ENCODE measurements at regions of chr19 and their contacts with region 1.

Region 1: GRCh38 chr19:12847159-12848139 is 9.1 kb downstream of the MAST1 start:
- DNase-seq: peak; percentile 81 to 91 (median 90)
- H3K4me3 ChIP-seq: peak overlapping the region in 3 of 7 experiments; percentile 25 to 68 (median 46)
- H3K27ac ChIP-seq: no peak overlapping the region
- H3K4me1 ChIP-seq: peaks cover 0 to 11% (median 8%) of the 10 kb centered on the region in 4 experiments
- H3K27me3 ChIP-seq: peaks cover 0 to 22% (median 6%) of the 10 kb centered on the region in 5 experiments

Region 2: GRCh38 chr19:12757544-12758274 is 89.7 kb before region 1 on chr19:
- CTCF ChIA-PET with region 1: interaction called, 14 read pairs
- POLR2A ChIA-PET with region 1: no interaction called
- DNase-seq: peak; percentile 77 to 87 (median 87)
- H3K4me3 ChIP-seq: peak overlapping the region in 6 of 7 experiments; percentile 6 to 62 (median 37)
- H3K27ac ChIP-seq: no peak overlapping the region
- H3K4me1 ChIP-seq: peaks cover 0 to 8% (median 5%) of the 10 kb centered on the region in 4 experiments
- H3K27me3 ChIP-seq: peaks cover 0 to 19% (median 2%) of the 10 kb centered on the region in 5 experiments

Region 3: DNA sequence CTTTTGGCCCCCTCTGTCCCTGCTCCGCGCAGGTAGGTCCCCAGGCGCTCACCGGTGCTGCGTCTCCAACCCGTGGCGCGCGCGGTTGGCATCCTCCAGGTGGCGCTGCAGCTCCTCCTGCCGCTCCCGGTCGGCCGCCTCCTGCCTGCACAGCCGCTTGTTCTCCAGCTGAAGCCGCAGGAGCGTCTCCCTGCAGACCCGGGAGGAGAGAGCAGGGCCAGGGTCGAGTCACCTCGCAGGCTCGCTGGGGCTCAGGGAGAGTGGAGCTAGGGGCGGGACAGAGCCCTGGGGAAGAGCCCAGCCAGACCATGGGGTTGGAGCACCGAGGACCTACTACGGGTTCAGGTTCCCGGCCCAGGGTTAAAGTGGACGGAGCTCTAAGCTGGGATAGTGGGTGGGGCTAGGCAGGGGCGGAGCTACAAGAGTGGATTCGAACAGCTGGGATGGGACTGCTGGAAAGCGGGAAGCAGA is 81.4 kb before region 1 on chr19:
- CTCF ChIA-PET with region 1: interaction called, 15 read pairs
- POLR2A ChIA-PET with region 1: no interaction called
- DNase-seq: peak in 1 of 3 donors; percentile 59
- H3K4me3 ChIP-seq: peak overlapping the region in 5 of 7 experiments; percentile 26 to 78 (median 51)
- H3K27ac ChIP-seq: no peak overlapping the region
- H3K4me1 ChIP-seq: peaks cover 2 to 6% (median 4%) of the 10 kb centered on the region in 4 experiments
- H3K27me3 ChIP-seq: no peaks in the 10 kb centered on the region

Region 4: DNA sequence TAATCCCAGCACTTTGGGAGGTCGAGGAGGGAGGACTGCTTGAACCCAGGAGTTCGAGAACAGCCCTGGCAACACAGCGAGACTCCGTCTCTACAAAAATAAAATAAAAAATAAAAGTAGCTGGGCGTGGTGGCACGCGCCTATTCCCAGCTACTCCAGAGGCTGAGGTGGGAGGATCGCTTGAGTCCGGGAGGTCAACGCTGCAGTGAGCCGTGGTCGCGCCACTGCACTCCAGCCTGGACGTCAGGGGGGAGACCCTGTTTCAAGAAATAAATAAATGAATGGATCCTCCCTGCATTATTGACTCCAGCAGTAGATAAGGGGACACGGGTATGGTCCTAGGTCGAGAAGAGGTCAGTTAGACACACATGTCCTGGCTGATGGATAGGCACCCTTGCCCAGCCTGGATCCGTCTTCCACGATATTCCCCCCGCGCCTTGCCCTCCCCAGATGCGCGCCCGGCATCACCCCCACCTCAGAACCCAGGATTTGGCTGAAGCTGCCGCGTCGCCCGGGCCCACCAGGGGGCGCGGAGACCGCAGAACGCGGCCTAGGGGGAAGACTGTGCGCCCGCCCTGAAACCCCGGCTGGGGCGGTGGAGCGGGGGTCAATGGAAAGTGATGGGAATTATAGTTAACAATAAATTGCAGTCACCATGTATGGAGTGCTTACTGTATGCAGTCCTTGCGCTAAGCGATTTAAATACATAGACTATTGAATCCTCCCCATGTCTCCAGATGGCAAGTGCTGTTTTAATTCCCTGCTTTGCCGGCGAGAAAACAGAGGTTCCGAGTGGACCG is 70.0 kb before region 1 on chr19:
- CTCF ChIA-PET with region 1: interaction called, 14 read pairs
- POLR2A ChIA-PET with region 1: interaction called, 3 read pairs
- DNase-seq: peak; percentile 71 to 80 (median 79)
- H3K4me3 ChIP-seq: peak overlapping the region; percentile 27 to 90 (median 74)
- H3K27ac ChIP-seq: peak overlapping the region in 1 of 2 experiments; percentile 77
- H3K4me1 ChIP-seq: peaks cover 5 to 52% (median 51%) of the 10 kb centered on the region in 4 experiments
- H3K27me3 ChIP-seq: no peaks in the 10 kb centered on the region

Region 5: DNA sequence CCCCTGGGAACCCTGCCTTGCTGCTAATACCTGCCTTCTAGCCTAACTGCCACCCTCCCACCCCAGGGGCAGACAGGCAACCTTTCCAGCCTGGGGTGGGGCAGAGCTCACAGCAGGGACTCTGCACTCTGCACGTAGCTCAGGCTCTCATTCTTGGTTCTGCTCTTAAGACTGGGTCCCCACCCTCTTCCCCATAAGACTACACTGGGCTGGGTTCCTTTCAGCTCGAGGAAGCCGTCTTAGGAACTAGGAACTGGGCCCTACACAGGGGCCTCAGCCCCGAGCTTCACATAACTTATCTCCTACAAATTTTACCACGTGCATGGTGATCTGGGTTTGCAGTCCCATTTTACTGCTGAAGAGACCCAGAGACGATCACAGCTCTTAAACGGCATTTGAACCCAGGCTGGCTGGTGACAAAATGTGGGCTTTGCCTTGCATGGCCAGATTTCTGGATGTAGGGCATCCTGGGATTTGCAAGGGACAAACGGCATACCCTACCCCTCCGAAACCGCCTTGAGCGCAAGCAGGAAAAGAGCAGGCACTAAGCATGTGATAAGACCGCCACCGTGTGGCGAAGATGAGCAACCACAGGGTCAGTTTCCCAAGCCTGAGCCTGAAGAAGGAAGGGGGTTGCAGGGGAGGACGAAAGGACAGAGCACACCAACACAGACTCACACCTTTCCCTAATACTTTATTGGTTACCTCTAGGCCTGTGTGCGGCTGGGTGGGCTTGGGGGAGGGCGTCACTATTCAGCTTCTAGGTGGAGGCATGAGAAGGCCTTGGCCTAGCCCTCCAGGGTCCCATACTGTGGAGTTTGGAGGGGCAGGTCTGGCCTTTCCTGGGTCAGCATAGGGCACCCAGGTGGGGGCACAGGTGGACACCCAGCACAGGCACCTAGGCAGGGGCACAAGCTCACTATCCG is 51.0 kb before region 1 on chr19:
- CTCF ChIA-PET with region 1: interaction called, 18 read pairs
- POLR2A ChIA-PET with region 1: no interaction called
- DNase-seq: peak; percentile 76 to 88 (median 85)
- H3K4me3 ChIP-seq: peak overlapping the region in 4 of 7 experiments; percentile 3 to 40 (median 26)
- H3K27ac ChIP-seq: peak overlapping the region in 1 of 2 experiments; percentile 54
- H3K4me1 ChIP-seq: peaks cover 2 to 37% (median 34%) of the 10 kb centered on the region in 4 experiments
- H3K27me3 ChIP-seq: no peaks in the 10 kb centered on the region

Region 6: GRCh38 chr19:12801466-12802266 is 45.8 kb before region 1 on chr19 and contains the starts of genes PRDX2 and THSD8:
- CTCF ChIA-PET with region 1: interaction called, 12 read pairs
- POLR2A ChIA-PET with region 1: no interaction called
- DNase-seq: peak in 2 of 3 donors; percentile 86 to 88
- H3K4me3 ChIP-seq: peak within 1 kb of the TSS; percentile 65 to 97 (median 83)
- H3K27ac ChIP-seq: peak within 1 kb of the TSS in 1 of 2 experiments; percentile 74
- H3K4me1 ChIP-seq: peaks cover 0 to 33% (median 29%) of the 10 kb centered on the region in 4 experiments
- H3K27me3 ChIP-seq: peaks cover 0 to 3% (median 0%) of the 10 kb centered on the region in 5 experiments

Region 7: DNA sequence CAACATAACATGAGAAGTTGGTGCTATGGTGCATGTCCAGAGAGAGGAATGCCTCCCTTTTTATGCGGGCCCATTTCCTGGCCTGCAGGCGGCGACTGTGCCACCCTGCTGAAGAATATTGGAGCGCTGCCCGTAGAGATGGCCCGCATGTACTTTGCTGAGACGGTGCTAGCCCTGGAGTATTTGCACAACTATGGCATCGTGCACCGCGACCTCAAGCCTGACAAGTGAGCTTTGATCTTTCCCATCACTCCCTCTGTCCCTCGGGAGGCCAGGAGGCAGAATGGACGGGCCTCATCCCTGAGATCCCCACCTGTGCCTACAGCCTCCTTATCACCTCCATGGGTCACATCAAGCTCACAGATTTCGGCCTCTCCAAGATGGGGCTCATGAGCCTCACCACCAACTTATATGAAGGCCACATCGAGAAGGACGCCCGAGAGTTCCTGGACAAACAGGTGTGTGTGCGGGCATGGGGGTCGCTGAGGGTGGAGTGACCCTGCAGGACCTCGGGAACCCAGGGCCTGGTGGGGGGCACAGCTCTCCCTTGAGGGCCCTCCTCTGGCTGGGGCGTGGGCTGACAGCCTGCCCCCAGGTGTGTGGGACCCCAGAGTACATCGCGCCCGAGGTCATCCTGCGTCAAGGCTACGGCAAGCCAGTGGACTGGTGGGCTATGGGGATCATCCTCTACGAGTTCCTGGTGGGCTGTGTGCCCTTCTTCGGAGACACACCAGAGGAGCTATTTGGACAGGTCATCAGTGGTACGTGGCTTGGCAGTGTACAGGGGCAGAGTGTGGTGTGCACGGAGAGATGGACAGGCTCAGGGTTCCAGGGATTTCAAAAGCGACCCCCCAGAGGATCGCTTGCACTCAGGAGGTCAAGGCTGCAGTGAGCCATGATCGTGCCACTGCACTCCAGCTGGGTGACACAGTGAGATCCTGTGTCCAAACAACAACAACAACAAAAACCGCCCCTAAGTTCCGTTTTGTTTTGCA is 17.6 kb after region 1 on chr19:
- CTCF ChIA-PET with region 1: interaction called, 17 read pairs
- POLR2A ChIA-PET with region 1: interaction called, 4 read pairs
- DNase-seq: no peak
- H3K4me3 ChIP-seq: no peak overlapping the region
- H3K27ac ChIP-seq: no peak overlapping the region
- H3K4me1 ChIP-seq: peaks cover 0 to 12% (median 8%) of the 10 kb centered on the region in 4 experiments
- H3K27me3 ChIP-seq: peaks cover 0 to 4% (median 0%) of the 10 kb centered on the region in 5 experiments